GM10248 (cell line): ENCODE measurements at regions of chr10 and their contacts with region 1.

Region 1: GRCh38 chr10:73920089-73920488 is 9.2 kb downstream of the PLAU start:
- DNase-seq: peak; percentile 54
- CTCF ChIP-seq: no peak

Region 2: GRCh38 chr10:73899423-73899822 is 20.7 kb before region 1 on chr10:
- CTCF ChIA-PET with region 1: no interaction called
- POLR2A ChIA-PET with region 1: no interaction called
- DNase-seq: no peak
- CTCF ChIP-seq: no peak

Region 3: GRCh38 chr10:73931767-73932619 is 11.9 kb after region 1 on chr10:
- CTCF ChIA-PET with region 1: interaction called, 13 read pairs
- POLR2A ChIA-PET with region 1: interaction called, 4 read pairs
- DNase-seq: peak; percentile 75
- CTCF ChIP-seq: no peak